ENCODE measurements at regions of chr15 and their contacts with region 1.

Region 1: GRCh38 chr15:56098195-56098863 is 104.9 kb upstream of the NEDD4 start:
- DNase-seq: no peak
- ATAC-seq: no peak
- H3K4me3 ChIP-seq: no peak overlapping the region
- H3K27ac ChIP-seq: peak overlapping the region; percentile 79
- H3K4me1 ChIP-seq: peaks cover 48% of the 10 kb centered on the region
- H3K27me3 ChIP-seq: no peaks in the 10 kb centered on the region
- CTCF ChIP-seq: peak; percentile 13

Region 2: DNA sequence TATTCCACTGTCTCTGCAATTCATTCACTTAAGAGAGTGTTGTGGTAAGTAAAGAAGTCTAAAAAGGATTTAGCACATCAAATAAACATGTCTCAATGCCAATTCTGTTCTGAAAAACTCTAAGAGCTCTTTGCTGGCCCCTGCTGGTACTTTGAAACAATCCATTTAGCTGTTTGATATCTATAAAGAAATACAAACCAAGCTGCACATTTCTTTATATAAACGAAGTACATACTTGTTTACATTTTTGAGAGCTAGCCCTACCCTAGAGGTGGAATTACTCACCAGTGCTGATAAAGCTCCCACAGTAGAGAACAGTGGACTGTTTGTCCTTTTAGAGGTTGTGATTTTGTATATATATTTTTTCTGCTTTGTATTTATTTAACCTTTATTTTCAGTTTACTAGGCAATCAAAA is 180.4 kb before region 1 on chr15:
- intact Hi-C with region 1: loop called in 1 of 2 experiments (anchors 10 kb)
- DNase-seq: no peak
- ATAC-seq: peak; percentile 29 to 72 (median 55)
- H3K4me3 ChIP-seq: peak overlapping the region; percentile 68
- H3K27ac ChIP-seq: peak overlapping the region; percentile 82
- H3K4me1 ChIP-seq: no peaks in the 10 kb centered on the region
- H3K27me3 ChIP-seq: no peaks in the 10 kb centered on the region
- CTCF ChIP-seq: peak; percentile 73

Region 3: DNA sequence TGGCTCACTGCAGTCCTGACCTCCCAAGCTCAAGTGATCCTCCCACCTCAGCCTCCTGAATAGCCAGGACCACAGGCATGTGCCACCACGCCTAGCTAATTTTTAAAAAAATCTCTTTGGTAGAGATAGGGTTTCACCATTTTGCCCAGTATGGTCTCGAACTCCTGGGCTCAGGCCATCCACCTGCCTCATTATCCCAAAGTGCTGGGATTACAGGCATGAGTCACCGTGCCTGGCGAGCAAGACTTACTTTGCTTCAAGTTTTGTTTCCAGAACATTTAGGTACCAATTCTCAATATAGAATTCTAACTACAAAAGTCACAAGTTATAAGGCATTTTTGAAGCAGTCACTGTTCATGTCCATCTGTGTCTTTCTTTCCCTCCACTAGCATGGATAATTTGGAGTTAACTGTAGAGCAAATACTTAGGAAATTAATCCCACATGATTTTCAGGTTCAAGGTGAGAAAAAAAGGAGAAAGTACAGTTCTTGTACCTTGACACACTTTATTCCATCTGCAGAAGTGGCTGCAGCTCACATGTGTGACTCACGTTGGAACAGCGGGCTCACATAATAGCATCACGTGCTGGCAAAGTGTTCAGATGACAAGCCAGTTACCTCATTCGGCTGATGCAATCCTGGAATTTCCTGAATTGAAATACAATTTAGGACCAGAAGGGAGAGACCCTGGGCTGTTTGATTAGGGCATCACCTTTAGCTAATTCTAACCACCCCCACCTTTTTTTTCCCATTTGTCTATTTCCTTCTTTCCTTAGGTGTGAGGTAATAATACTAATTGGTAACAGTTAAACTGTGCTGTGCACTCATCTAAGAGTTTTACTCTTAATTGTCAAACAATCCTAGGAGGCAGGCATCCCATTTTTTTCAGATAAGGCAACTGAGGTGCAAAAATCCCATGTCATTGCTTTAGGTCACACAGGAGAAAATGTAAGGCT is 58.0 kb before region 1 on chr15:
- intact Hi-C with region 1: no loop called
- DNase-seq: peak; percentile 44 to 54
- ATAC-seq: peak; percentile 71 to 92 (median 82)
- H3K4me3 ChIP-seq: no peak overlapping the region
- H3K27ac ChIP-seq: peak overlapping the region; percentile 43
- H3K4me1 ChIP-seq: no peaks in the 10 kb centered on the region
- H3K27me3 ChIP-seq: no peaks in the 10 kb centered on the region
- CTCF ChIP-seq: no peak

Measured in psoas muscle (tissue), 8 donors.